ENCODE measurements at regions of chr21 and their contacts with region 1.

Region 1: GRCh38 chr21:46144464-46145070 is 10.8 kb downstream of the FTCD start:
- DNase-seq: no peak
- H3K4me3 ChIP-seq: no peak overlapping the region
- H3K27ac ChIP-seq: no peak overlapping the region; a peak in 1 of 4 replicates
- H3K4me1 ChIP-seq: peaks cover 0 to 10% of the 10 kb centered on the region in 2 experiments; a peak in 1 of 4 replicates
- H3K27me3 ChIP-seq: no peaks in the 10 kb centered on the region
- CTCF ChIP-seq: no peak
- EP300 ChIP-seq: no peak
- RAD21 ChIP-seq: no peak

Region 2: GRCh38 chr21:45973659-45974072 is 170.9 kb before region 1 on chr21:
- CTCF ChIA-PET with region 1: interaction called, 15 read pairs
- POLR2A ChIA-PET with region 1: interaction called, 3 read pairs
- DNase-seq: peak; percentile 90
- H3K4me3 ChIP-seq: peak overlapping the region; percentile 29 to 41; a peak in 3 of 4 replicates
- H3K27ac ChIP-seq: peak overlapping the region; percentile 27 to 98; a peak in 3 of 4 replicates
- H3K4me1 ChIP-seq: peaks cover 23 to 71% of the 10 kb centered on the region in 2 experiments; a peak in 3 of 4 replicates
- H3K27me3 ChIP-seq: no peaks in the 10 kb centered on the region
- CTCF ChIP-seq: peak; percentile 70
- EP300 ChIP-seq: no peak
- RAD21 ChIP-seq: peak; percentile 65

Region 3: DNA sequence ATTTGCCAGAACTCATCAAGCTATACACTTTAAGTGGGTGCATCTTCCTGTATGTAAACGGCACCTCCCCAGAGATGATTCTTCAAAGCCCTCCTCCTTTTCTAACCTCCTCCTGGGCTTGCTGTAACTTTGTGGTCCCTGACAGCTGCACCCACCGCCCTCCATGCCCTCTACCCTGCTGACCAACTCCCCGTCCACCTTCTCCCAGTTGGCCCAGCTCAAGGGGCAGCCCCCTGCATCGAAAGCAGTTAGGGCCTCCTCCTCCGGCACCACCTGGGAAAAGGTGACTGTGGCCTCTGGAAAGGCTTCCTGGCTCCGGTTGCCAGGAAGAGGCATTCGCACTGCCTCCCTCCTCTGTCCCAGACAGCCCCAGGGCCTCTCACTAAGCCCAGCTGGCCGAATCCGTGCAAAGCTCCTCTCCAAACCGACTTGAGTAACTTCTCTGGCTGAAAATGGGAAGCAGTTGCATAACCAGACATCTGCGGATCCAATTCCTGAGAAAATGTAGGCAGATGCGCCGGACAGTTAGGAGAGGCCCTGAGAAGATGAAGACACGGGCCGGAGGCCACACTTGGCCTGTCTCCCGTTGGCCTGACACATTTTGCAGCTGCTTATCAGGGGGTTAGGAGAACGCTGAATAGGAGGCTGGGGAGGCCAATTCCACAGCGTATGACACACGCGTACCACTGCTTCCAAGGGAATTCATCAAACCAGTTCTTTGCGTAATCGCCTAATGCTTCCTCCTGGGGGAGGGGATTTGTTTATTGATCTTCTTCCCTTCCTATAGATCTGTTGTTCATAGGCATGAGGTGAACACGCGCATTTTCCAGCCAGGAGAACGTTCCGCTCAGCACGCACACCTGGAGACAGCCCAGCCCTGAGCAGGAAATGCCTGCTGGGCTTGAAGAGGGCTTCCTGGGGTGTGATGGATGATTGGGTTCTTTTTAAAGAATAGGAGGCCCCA is 95.4 kb before region 1 on chr21:
- CTCF ChIA-PET with region 1: no interaction called
- POLR2A ChIA-PET with region 1: no interaction called
- DNase-seq: no peak
- H3K4me3 ChIP-seq: no peak overlapping the region
- H3K27ac ChIP-seq: no peak overlapping the region
- H3K4me1 ChIP-seq: no peaks in the 10 kb centered on the region; a peak in 1 of 4 replicates
- H3K27me3 ChIP-seq: no peaks in the 10 kb centered on the region
- CTCF ChIP-seq: no peak
- EP300 ChIP-seq: no peak
- RAD21 ChIP-seq: no peak

Region 4: GRCh38 chr21:46128106-46128860 is 16.3 kb before region 1 on chr21:
- CTCF ChIA-PET with region 1: interaction called, 28 read pairs
- POLR2A ChIA-PET with region 1: interaction called, 7 read pairs
- DNase-seq: peak; percentile 89
- H3K4me3 ChIP-seq: no peak overlapping the region
- H3K27ac ChIP-seq: peak overlapping the region in 1 of 2 experiments; percentile 94; a peak in 2 of 4 replicates
- H3K4me1 ChIP-seq: peaks cover 0 to 41% of the 10 kb centered on the region in 2 experiments; a peak in 1 of 4 replicates
- H3K27me3 ChIP-seq: no peaks in the 10 kb centered on the region
- CTCF ChIP-seq: no peak
- EP300 ChIP-seq: peak in 1 of 2 experiments; percentile 58; a peak in 2 of 4 replicates
- RAD21 ChIP-seq: no peak

Region 5: GRCh38 chr21:46171996-46172862 is 27.7 kb after region 1 on chr21:
- CTCF ChIA-PET with region 1: interaction called, 15 read pairs
- POLR2A ChIA-PET with region 1: no interaction called
- DNase-seq: no peak
- H3K4me3 ChIP-seq: no peak overlapping the region
- H3K27ac ChIP-seq: no peak overlapping the region
- H3K4me1 ChIP-seq: no peaks in the 10 kb centered on the region
- H3K27me3 ChIP-seq: no peaks in the 10 kb centered on the region
- CTCF ChIP-seq: no peak
- EP300 ChIP-seq: no peak
- RAD21 ChIP-seq: no peak

Region 6: DNA sequence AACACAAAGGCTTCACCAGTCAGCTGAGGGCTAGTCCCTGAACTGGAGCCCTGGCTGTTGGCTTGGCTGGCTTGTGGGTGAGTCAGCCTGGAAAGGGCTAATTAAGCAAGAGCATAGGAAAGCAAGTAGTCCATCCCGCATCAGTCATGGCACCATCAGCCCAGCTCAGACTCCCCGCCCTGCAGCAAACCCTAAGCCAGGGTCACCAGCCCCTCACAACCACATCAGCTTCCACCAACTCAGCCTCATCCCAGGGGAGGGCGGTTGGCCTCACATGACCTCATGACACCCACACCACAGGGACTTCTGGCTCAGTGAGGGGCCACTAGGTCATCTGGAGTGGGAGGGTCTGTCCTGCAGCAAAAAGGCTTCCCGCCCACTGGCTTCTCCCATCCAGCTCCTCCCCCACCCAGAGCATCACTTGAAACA is 46.7 kb after region 1 on chr21:
- CTCF ChIA-PET with region 1: interaction called, 14 read pairs
- POLR2A ChIA-PET with region 1: no interaction called
- DNase-seq: peak; percentile 28
- H3K4me3 ChIP-seq: no peak overlapping the region
- H3K27ac ChIP-seq: 0 out of 4 replicates have a peak overlapping the region, but pooled peaks of 1 of the 2 experiments have one; percentile 23
- H3K4me1 ChIP-seq: peaks cover 20 to 50% of the 10 kb centered on the region in 2 experiments
- H3K27me3 ChIP-seq: no peaks in the 10 kb centered on the region
- CTCF ChIP-seq: no peak
- EP300 ChIP-seq: no peak
- RAD21 ChIP-seq: no peak

Region 7: DNA sequence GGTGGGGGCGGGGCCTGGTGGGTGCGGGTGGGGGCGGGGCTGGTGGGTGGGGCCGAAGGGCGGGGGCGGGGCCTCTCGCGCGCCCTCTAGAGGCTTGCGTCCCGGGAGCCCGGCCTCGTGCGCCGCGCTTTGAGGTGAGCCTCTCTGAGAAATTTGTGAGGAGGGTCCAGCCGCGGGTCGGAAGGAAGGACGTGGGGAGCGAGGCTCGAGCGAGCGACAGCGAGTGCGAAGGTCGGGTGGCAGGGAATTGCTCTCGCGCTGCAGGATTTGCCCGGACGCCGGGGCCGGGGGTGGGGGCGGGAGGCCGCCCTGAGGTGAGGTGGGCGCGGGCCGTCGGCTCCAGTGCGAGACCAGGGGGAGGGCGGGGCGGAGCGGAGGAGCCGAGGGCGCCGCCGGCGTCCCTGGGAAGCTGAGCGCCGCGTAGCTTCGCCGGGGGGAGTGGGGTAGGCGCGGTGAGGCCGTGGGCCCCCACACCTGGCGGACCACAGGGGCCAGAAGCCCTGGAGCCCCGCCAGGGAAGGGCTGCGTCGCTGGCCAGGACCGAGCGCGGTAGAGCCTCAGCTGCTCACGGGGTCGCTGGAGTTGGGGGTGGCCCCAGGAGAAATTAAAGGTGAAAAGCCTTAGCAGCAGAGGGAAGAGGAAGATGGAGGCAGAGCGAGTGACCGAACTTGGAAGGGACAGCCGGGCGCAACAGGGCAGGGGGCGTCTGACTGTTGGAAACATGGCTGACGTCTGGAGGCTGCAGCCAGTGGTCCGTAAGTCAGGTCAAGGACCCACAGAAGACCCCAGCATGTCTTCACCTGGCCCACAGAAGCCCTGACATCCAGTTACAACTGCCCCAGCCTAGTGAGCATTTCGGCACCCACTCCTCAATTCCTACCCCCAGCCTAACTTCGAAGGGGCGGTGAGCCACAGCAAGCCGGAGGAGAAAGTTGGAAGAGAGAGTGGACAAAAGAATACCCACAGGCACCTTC is 84.9 kb after region 1 on chr21:
- CTCF ChIA-PET with region 1: interaction called, 14 read pairs
- POLR2A ChIA-PET with region 1: no interaction called
- DNase-seq: peak; percentile 86
- H3K4me3 ChIP-seq: peak overlapping the region; percentile 54 to 76
- H3K27ac ChIP-seq: peak overlapping the region in 1 of 2 experiments; percentile 76; a peak in 2 of 4 replicates
- H3K4me1 ChIP-seq: peaks cover 12 to 23% of the 10 kb centered on the region in 2 experiments; a peak in 3 of 4 replicates
- H3K27me3 ChIP-seq: no peaks in the 10 kb centered on the region
- CTCF ChIP-seq: peak; percentile 64
- EP300 ChIP-seq: no peak
- RAD21 ChIP-seq: no peak

Region 8: DNA sequence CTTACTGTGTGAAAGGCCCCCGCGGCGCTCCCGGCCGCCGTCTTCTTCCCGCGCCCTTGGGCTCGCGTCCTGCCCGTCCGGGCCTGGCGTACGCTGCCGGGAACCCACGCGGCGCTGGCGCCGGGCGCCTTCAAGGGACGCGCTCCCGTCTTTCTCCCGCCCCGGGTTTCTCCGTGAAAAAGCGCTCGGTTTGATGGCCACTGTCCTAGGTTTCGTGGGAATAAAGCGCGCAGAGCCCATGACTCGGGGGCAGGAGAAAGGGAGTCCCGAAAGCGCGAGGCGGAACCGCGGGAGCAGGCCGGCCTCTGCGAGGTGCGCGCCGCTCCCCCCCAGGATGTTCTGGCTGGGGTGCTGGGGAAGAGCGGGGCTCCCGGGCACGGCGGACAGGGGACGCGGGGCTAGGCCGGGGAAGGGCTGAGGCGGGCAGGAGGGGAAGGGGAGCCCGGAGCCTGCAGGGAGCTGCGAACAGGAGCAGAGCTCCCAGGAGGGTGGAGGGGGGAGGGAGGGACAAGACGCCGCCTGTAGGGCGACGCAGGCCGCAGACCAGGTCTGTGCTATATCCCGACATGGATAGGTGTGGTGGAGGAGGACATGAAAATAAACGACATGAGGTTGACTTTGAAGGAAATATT is 180.4 kb after region 1 on chr21:
- CTCF ChIA-PET with region 1: interaction called, 10 read pairs
- POLR2A ChIA-PET with region 1: no interaction called
- DNase-seq: peak; percentile 79
- H3K4me3 ChIP-seq: peak overlapping the region; percentile 68 to 84
- H3K27ac ChIP-seq: peak overlapping the region; percentile 81 to 92
- H3K4me1 ChIP-seq: peaks cover 15 to 32% of the 10 kb centered on the region in 2 experiments; a peak in 3 of 4 replicates
- H3K27me3 ChIP-seq: no peaks in the 10 kb centered on the region
- CTCF ChIP-seq: peak; percentile 26
- EP300 ChIP-seq: no peak
- RAD21 ChIP-seq: peak; percentile 24